MCF 10A (cell line): ENCODE measurements at regions of chr1 and their contacts with region 1.

Region 1: DNA sequence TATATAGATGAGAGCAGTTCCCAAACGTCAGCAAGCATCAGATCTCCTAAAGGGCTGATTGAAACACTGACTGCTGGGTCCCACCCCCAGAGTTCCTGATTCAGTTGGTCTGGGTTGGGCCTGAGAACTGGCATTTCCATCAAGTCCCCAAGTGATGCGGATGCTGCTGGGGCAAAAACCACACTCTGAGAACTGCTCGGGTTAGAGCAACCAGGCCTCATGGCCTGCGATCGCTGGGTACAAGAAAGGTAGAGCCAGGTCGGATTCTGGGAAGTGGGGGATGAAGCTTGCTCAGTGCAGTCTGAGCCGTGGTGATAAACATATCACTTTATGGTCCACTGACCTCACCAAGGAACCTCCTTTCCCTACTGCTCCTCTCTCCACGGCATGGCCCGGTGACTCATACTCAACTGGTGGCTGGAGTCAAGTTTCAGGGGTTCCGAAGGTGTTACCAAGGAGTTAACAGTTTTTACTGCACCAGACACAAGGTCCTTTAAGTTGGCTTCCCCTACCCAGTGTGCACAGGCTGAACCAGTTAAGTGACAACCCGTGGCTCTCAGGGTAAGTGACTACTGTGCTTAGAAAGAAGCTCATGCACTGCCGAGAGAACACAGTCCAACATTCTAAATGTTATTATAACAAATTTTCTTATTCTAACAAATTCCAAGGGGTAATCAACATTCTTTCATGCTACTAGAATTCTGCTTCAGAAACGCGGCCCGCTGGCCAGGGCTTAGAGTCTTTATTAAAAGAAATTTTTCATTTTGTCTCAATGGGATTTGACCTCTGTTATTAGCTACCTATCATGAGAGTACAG is 153.5 kb downstream of the TGFBR3 start:
- DNase-seq: peak; percentile 85
- H3K4me3 Mint-ChIP-seq: peak overlapping the region; percentile 47
- H3K27ac Mint-ChIP-seq: peak overlapping the region; percentile 79
- H3K4me1 Mint-ChIP-seq: peaks cover 55% of the 10 kb centered on the region
- H3K27me3 Mint-ChIP-seq: no peaks in the 10 kb centered on the region
- CTCF ChIP-seq: no peak

Region 2: GRCh38 chr1:91537281-91537986 is 195.1 kb before region 1 on chr1:
- CTCF ChIA-PET with region 1: no interaction called
- POLR2A ChIA-PET with region 1: interaction called, 18 read pairs
- intact Hi-C with region 1: no loop called
- DNase-seq: peak; percentile 66
- H3K4me3 Mint-ChIP-seq: peak overlapping the region; percentile 19
- H3K27ac Mint-ChIP-seq: peak overlapping the region; percentile 76
- H3K4me1 Mint-ChIP-seq: peaks cover 25% of the 10 kb centered on the region
- H3K27me3 Mint-ChIP-seq: no peaks in the 10 kb centered on the region
- CTCF ChIP-seq: no peak

Region 3: GRCh38 chr1:91569411-91570119 is 162.9 kb before region 1 on chr1:
- CTCF ChIA-PET with region 1: no interaction called
- POLR2A ChIA-PET with region 1: interaction called, 10 read pairs
- intact Hi-C with region 1: no loop called
- DNase-seq: peak; percentile 90
- H3K4me3 Mint-ChIP-seq: peak overlapping the region; percentile 64
- H3K27ac Mint-ChIP-seq: peak overlapping the region; percentile 98
- H3K4me1 Mint-ChIP-seq: peaks cover 16% of the 10 kb centered on the region
- H3K27me3 Mint-ChIP-seq: no peaks in the 10 kb centered on the region
- CTCF ChIP-seq: no peak

Region 4: GRCh38 chr1:91751275-91751674 is 18.8 kb after region 1 on chr1:
- CTCF ChIA-PET with region 1: interaction called, 6 read pairs
- POLR2A ChIA-PET with region 1: interaction called, 20 read pairs
- intact Hi-C with region 1: no loop called
- DNase-seq: no peak
- H3K4me3 Mint-ChIP-seq: no peak overlapping the region
- H3K27ac Mint-ChIP-seq: peak overlapping the region; percentile 61
- H3K4me1 Mint-ChIP-seq: peaks cover 23% of the 10 kb centered on the region
- H3K27me3 Mint-ChIP-seq: no peaks in the 10 kb centered on the region
- CTCF ChIP-seq: no peak

Region 5: DNA sequence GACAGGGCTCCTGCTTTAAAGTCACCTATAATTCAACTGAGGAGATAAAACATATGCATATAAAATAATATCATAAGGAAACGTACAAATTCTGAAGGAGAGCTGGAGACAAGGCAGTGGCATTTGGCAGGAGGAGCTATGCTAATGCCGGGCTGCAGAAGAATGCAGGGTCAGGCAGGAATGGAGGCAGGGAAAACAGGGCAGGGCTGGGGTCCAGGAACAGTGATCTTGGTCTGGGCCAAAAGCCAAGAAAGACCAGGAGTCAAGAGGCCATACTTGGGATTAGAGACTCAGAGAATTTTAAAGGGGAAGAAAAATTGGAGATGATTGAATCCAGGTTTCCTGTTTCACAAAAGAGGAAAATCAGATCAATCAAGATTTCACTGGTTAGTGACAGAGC is 196.8 kb after region 1 on chr1:
- CTCF ChIA-PET with region 1: interaction called, 7 read pairs
- POLR2A ChIA-PET with region 1: interaction called, 3 read pairs
- intact Hi-C with region 1: loop called (anchors 5 kb)
- DNase-seq: no peak
- H3K4me3 Mint-ChIP-seq: no peak overlapping the region
- H3K27ac Mint-ChIP-seq: no peak overlapping the region
- H3K4me1 Mint-ChIP-seq: peaks cover 13% of the 10 kb centered on the region
- H3K27me3 Mint-ChIP-seq: no peaks in the 10 kb centered on the region
- CTCF ChIP-seq: no peak